MCF 10A (cell line): ENCODE measurements at regions of chrX and their contacts with region 1.

Region 1: DNA sequence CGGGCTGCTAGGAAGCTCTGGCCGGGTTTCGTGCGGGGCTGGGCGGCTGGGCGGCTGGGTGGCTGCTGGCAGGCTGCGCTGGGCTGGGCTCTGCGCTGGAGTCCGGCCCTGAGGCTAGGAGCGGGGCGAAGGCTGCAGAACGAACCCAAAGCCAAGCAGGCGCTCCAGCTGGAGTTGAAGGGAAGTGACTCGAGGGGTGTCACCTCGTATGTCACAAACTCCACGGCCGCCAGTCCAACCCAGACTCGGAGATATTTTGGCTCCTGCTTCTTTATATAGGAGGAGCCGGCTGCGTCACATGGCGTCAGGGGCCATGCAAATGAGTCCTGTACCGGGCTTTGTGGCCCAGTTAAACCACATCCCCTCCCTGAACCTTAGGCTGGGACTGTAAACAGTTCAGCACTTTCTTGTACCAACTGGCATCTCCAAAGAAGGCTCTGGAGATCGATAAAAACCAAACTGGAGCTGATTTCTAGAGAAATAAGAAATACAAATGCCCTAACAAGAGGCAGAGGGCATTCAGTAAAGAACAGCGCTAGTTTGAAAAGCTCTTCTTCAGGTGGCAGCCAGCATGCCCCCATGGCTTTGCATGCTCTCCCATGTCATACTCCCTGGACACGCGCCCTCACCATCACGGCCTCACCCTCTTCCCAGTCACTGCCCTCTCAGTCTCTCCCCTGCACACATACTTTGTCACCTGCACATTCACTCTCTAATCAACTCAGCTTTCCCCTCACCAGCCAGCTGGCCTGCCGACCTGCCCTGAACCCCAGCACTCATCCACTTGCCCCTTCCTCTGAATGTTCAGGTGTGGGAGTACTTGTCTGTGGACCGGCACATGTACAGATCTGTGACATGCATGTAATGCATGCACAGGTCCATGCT is 58.5 kb downstream of the TSC22D3 start:
- DNase-seq: peak; percentile 84
- H3K4me3 Mint-ChIP-seq: peak overlapping the region; percentile 74
- H3K27ac Mint-ChIP-seq: peak overlapping the region; percentile 60
- H3K4me1 Mint-ChIP-seq: peaks cover 21% of the 10 kb centered on the region
- H3K27me3 Mint-ChIP-seq: peaks cover 42% of the 10 kb centered on the region
- CTCF ChIP-seq: no peak

Region 2: GRCh38 chrX:107025545-107025944 is 691.5 kb before region 1 on chrX:
- CTCF ChIA-PET with region 1: no interaction called
- POLR2A ChIA-PET with region 1: no interaction called
- intact Hi-C with region 1: loop called (anchors 1 kb)
- DNase-seq: peak; percentile 50
- H3K4me3 Mint-ChIP-seq: no peak overlapping the region
- H3K27ac Mint-ChIP-seq: no peak overlapping the region
- H3K4me1 Mint-ChIP-seq: no peaks in the 10 kb centered on the region
- H3K27me3 Mint-ChIP-seq: peaks cover 71% of the 10 kb centered on the region
- CTCF ChIP-seq: peak; percentile 58

Region 3: DNA sequence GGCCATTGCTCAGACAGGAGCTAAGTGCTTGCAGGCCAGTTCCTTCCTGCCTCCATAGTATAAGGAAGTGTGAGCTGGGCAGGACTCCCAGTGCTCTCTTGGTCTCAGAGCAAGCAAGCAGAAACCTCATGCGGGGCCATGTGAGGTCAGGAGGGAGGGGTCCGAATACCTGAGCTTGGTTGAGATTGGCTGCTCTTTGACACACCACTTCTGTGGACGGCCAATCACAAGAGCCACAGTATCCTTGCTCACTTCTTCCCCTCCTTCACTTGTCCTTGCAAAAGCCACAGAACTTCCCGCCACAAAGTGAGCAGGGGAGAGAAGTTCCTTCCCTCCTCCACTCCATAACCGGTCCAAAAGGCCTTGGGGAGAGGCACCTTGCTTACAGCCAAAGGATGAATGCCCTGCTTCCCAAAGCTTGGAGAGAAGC is 32.1 kb before region 1 on chrX:
- CTCF ChIA-PET with region 1: interaction called, 157 read pairs
- POLR2A ChIA-PET with region 1: interaction called, 679 read pairs
- intact Hi-C with region 1: no loop called
- DNase-seq: peak; percentile 93
- H3K4me3 Mint-ChIP-seq: no peak overlapping the region
- H3K27ac Mint-ChIP-seq: no peak overlapping the region
- H3K4me1 Mint-ChIP-seq: peaks cover 28% of the 10 kb centered on the region
- H3K27me3 Mint-ChIP-seq: peaks cover 70% of the 10 kb centered on the region
- CTCF ChIP-seq: no peak

Region 4: GRCh38 chrX:107731831-107732502 is 14.9 kb after region 1 on chrX:
- CTCF ChIA-PET with region 1: interaction called, 17 read pairs
- POLR2A ChIA-PET with region 1: interaction called, 119 read pairs
- intact Hi-C with region 1: no loop called
- DNase-seq: peak; percentile 92
- H3K4me3 Mint-ChIP-seq: peak overlapping the region; percentile 24
- H3K27ac Mint-ChIP-seq: no peak overlapping the region
- H3K4me1 Mint-ChIP-seq: peaks cover 15% of the 10 kb centered on the region
- H3K27me3 Mint-ChIP-seq: peaks cover 65% of the 10 kb centered on the region
- CTCF ChIP-seq: no peak

Region 5: GRCh38 chrX:107747596-107748161 is 30.6 kb after region 1 on chrX:
- CTCF ChIA-PET with region 1: interaction called, 4 read pairs
- POLR2A ChIA-PET with region 1: interaction called, 75 read pairs
- intact Hi-C with region 1: no loop called
- DNase-seq: peak; percentile 68
- H3K4me3 Mint-ChIP-seq: peak overlapping the region; percentile 5
- H3K27ac Mint-ChIP-seq: peak overlapping the region; percentile 88
- H3K4me1 Mint-ChIP-seq: peaks cover 27% of the 10 kb centered on the region
- H3K27me3 Mint-ChIP-seq: peaks cover 61% of the 10 kb centered on the region
- CTCF ChIP-seq: no peak

Region 6: DNA sequence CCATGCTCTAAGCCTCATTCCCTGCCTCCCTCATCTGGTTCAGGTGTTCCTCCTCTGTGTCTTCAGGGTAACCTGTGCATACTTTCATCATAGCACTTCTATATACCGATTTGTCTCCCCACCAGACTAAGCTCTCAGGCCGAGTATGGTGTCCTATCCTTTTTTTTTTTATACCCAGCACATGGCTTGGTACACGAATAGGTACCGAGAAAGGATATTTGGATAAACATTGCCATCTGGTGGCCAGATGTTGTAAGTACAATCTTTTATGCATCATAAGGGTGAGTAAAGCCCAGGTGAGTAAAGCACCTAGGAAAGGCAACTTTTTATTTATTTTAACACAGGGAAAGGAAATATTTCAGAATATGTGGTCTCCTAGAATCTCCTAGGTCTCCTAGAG is 177.0 kb after region 1 on chrX:
- CTCF ChIA-PET with region 1: no interaction called
- POLR2A ChIA-PET with region 1: no interaction called
- intact Hi-C with region 1: loop called (anchors 2 kb)
- DNase-seq: peak; percentile 71
- H3K4me3 Mint-ChIP-seq: no peak overlapping the region
- H3K27ac Mint-ChIP-seq: no peak overlapping the region
- H3K4me1 Mint-ChIP-seq: no peaks in the 10 kb centered on the region
- H3K27me3 Mint-ChIP-seq: peaks cover 59% of the 10 kb centered on the region
- CTCF ChIP-seq: peak; percentile 46

Region 7: DNA sequence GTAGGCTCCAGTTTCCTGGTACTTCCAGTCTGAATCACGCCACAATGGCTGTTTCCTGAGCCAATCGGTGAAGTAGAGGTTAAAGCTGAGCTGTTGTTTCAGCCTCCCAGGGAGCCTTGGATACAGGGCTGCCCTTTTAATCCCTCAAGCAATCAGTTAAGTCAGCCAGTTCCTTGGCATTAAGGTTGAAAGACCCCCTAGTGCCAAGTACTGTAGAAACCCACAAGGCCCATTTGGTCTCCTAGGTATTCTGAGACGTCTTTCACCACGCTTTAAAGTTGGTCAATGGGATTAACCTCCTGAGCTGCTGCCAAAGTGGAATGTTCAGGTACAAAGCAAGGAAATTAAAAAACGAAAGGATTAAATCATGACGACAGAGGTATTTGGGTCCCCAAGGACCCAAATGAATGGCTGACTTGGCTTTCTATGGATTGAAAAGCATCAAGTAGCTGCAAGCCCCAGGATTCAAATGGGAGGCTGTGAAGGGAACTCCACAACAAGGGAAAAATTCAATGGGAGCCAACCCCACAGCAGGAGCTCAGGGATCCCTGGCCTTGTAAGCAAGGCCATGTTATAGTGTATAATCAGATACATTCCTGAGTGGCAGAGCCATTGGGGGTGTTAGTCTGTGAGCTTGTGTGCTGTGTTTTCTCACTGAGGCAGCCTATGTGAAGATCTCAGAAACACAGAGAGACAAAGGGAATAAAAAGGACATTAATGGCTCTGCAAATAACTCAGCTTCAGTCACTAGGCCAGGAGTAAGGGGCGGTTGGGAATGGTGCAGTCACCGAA is 460.5 kb after region 1 on chrX:
- CTCF ChIA-PET with region 1: no interaction called
- POLR2A ChIA-PET with region 1: no interaction called
- intact Hi-C with region 1: no loop called
- DNase-seq: no peak
- H3K4me3 Mint-ChIP-seq: no peak overlapping the region
- H3K27ac Mint-ChIP-seq: no peak overlapping the region
- H3K4me1 Mint-ChIP-seq: no peaks in the 10 kb centered on the region
- H3K27me3 Mint-ChIP-seq: peaks cover 67% of the 10 kb centered on the region
- CTCF ChIP-seq: no peak